A673 (cell line): ENCODE measurements at regions of chr3 and their contacts with region 1.

Region 1: GRCh38 chr3:138995706-138996105 is 10.4 kb downstream of the PRR23A start:
- DNase-seq: no peak
- H3K4me3 ChIP-seq: no peak overlapping the region
- H3K27ac ChIP-seq: no peak overlapping the region
- H3K4me1 ChIP-seq: no peaks in the 10 kb centered on the region
- H3K27me3 ChIP-seq: peaks cover 37% of the 10 kb centered on the region
- CTCF ChIP-seq: no peak

Region 2: GRCh38 chr3:138686771-138687221 is 308.9 kb before region 1 on chr3:
- CTCF ChIA-PET with region 1: no interaction called
- POLR2A ChIA-PET with region 1: no interaction called
- intact Hi-C with region 1: no loop called
- DNase-seq: peak; percentile 21
- H3K4me3 ChIP-seq: no peak overlapping the region
- H3K27ac ChIP-seq: peak overlapping the region; percentile 11
- H3K4me1 ChIP-seq: peaks cover 38% of the 10 kb centered on the region
- H3K27me3 ChIP-seq: no peaks in the 10 kb centered on the region
- CTCF ChIP-seq: no peak

Region 3: GRCh38 chr3:139016430-139017048 is 20.8 kb after region 1 on chr3:
- CTCF ChIA-PET with region 1: no interaction called
- POLR2A ChIA-PET with region 1: interaction called, 21 read pairs
- intact Hi-C with region 1: no loop called
- DNase-seq: no peak
- H3K4me3 ChIP-seq: no peak overlapping the region
- H3K27ac ChIP-seq: no peak overlapping the region
- H3K4me1 ChIP-seq: no peaks in the 10 kb centered on the region
- H3K27me3 ChIP-seq: peaks cover 7% of the 10 kb centered on the region
- CTCF ChIP-seq: no peak